A549 (cell line): ENCODE measurements at regions of chr5 and their contacts with region 1.

Region 1: DNA sequence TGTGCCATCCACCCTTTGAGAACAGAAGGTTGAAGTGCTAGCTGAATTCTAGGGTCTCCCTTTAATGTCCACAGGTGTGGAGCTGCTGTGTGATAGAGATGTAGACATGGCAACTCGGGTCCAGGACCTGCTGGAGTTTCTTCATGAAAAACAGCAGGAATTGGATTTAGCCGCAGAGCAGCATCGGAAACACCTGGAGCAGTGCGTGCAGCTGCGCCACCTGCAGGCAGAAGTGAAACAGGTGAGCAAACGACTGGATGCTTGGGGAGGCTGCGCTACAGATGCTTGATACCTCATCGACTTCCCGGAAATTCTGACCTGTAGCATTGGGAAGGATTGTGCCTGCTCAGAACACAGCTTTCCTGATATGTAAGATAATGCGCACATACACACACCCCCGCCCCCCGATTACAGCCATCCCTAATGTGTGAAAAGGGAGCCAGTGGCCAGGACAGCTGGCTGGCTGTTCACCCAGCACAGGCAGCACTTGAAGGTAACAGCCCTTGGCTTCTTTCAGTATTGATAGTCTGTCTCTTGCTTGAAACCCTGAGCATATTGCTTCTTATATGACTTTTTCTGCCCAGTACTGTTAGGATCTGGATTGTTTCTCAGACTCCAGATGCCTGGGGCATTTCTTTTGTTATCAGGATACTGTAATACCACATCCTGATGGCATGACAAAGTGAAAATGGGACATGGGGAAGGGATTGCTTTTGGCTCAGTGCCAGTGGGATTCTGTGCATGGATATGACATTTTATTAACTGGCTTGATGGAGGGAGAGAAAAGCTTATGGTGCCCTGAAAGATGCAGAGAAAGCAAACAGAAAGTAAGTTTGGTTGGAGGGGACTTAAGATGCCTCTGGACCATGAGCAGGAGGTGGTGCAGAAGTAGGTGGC is 216.8 kb upstream of the OTULINL start:
- DNase-seq: peak; percentile 13 to 48
- ATAC-seq: peak; percentile 41 to 69; a peak in 4 of 6 replicates
- H3K4me3 ChIP-seq: no peak overlapping the region
- H3K27ac ChIP-seq: no peak overlapping the region
- H3K4me1 ChIP-seq: no peaks in the 10 kb centered on the region
- CTCF ChIP-seq: peak; percentile 62
- EP300 ChIP-seq: no peak
- POLR2A ChIP-seq: no peak
- RAD21 ChIP-seq: peak; percentile 15 to 57; a peak in 3 of 5 replicates

Region 2: DNA sequence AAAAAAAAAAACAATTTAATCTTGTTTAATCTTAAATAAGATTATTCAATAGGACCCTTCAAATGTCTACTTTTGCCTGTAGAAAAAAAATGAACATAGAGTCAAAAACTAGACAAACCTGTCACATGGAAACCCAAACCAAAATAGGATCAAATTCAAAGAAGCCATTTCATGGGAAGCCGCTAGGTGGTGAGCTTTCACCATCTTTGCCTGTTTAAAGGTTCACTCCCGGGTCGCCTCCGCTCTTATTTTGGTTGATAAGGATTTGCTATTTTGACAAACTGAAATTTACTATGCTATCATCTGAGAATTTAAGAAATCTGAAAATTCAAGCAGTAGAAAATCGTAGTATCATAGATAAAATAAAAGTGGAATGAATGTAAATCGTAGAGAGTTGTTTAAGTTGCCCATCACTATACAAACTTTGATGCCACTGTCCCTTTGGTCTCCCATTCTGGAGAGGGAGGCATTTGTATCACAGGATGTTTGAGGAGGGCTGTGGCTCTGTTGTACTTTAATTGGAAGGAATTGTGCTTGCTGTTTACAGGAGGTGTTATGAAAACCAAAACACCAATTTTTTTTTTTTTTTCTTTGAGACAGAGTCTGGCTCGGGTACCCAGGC is 376.9 kb before region 1 on chr5:
- CTCF ChIA-PET with region 1: interaction called, 12 read pairs
- POLR2A ChIA-PET with region 1: no interaction called
- DNase-seq: peak; percentile 71 to 74
- ATAC-seq: peak in 1 of 2 experiments; percentile 68; a peak in 3 of 6 replicates
- H3K4me3 ChIP-seq: no peak overlapping the region
- H3K27ac ChIP-seq: peak overlapping the region; percentile 56 to 61; a peak in 4 of 6 replicates
- H3K4me1 ChIP-seq: peaks cover 18% of the 10 kb centered on the region
- CTCF ChIP-seq: peak; percentile 97
- EP300 ChIP-seq: no peak
- POLR2A ChIP-seq: no peak
- RAD21 ChIP-seq: peak; percentile 97

Region 3: GRCh38 chr5:14264604-14265316 is 100.1 kb before region 1 on chr5:
- CTCF ChIA-PET with region 1: no interaction called
- POLR2A ChIA-PET with region 1: no interaction called
- DNase-seq: peak; percentile 88 to 93
- ATAC-seq: peak; percentile 82 to 84
- H3K4me3 ChIP-seq: peak overlapping the region; percentile 34
- H3K27ac ChIP-seq: peak overlapping the region; percentile 66 to 84
- H3K4me1 ChIP-seq: peaks cover 81% of the 10 kb centered on the region
- CTCF ChIP-seq: no peak
- EP300 ChIP-seq: no peak
- POLR2A ChIP-seq: peak; percentile 52
- RAD21 ChIP-seq: peak in 1 of 2 experiments; percentile 22; a peak in 2 of 5 replicates

Region 4: GRCh38 chr5:14351845-14352712 is 12.7 kb before region 1 on chr5:
- CTCF ChIA-PET with region 1: interaction called, 42 read pairs
- POLR2A ChIA-PET with region 1: no interaction called
- DNase-seq: peak; percentile 61 to 74
- ATAC-seq: peak; percentile 97
- H3K4me3 ChIP-seq: no peak overlapping the region
- H3K27ac ChIP-seq: no peak overlapping the region
- H3K4me1 ChIP-seq: no peaks in the 10 kb centered on the region
- CTCF ChIP-seq: peak; percentile 85
- EP300 ChIP-seq: no peak
- POLR2A ChIP-seq: no peak
- RAD21 ChIP-seq: peak; percentile 51 to 65

Region 5: DNA sequence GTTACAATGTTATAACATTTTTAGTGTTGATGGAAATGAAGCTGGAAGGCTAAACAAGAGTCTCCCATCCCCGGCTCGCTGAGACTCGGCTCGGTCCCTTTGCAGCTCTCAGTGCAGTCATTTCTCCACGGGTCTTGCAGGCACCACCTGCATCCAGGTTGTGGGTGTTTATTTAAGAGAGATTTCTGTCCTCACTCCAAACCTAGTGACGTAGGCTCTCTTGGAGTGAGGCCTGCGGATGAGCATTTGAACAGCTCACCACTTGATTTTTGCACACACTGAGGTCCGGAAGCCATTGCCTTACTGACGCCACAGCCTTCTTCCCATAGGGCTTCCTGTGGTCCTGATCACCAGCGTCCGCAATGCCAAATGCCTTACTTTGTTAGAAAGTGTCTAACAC is 19.1 kb after region 1 on chr5:
- CTCF ChIA-PET with region 1: interaction called, 11 read pairs
- POLR2A ChIA-PET with region 1: no interaction called
- DNase-seq: no peak
- ATAC-seq: no peak
- H3K4me3 ChIP-seq: no peak overlapping the region
- H3K27ac ChIP-seq: no peak overlapping the region
- H3K4me1 ChIP-seq: no peaks in the 10 kb centered on the region
- CTCF ChIP-seq: no peak
- EP300 ChIP-seq: no peak
- POLR2A ChIP-seq: no peak
- RAD21 ChIP-seq: no peak

Region 6: GRCh38 chr5:14650052-14650451 is 285.2 kb after region 1 on chr5:
- CTCF ChIA-PET with region 1: interaction called, 40 read pairs
- POLR2A ChIA-PET with region 1: no interaction called
- DNase-seq: no peak
- ATAC-seq: no peak
- H3K4me3 ChIP-seq: no peak overlapping the region
- H3K27ac ChIP-seq: no peak overlapping the region
- H3K4me1 ChIP-seq: no peaks in the 10 kb centered on the region
- CTCF ChIP-seq: no peak
- EP300 ChIP-seq: no peak
- POLR2A ChIP-seq: no peak
- RAD21 ChIP-seq: no peak